PC-9 (cell line): ENCODE measurements at regions of chr19 and their contacts with region 1.

Region 1: GRCh38 chr19:51097166-51097738 is 11.0 kb downstream of the CTU1 start:
- DNase-seq: peak; percentile 62 to 69
- H3K4me3 ChIP-seq: no peak overlapping the region
- H3K27ac ChIP-seq: no peak overlapping the region
- H3K4me1 ChIP-seq: no peaks in the 10 kb centered on the region
- H3K27me3 ChIP-seq: no peaks in the 10 kb centered on the region
- CTCF ChIP-seq: peak; percentile 85

Region 2: GRCh38 chr19:50537762-50538230 is 559.5 kb before region 1 on chr19:
- CTCF ChIA-PET with region 1: interaction called, 3 read pairs
- POLR2A ChIA-PET with region 1: no interaction called
- intact Hi-C with region 1: loop called (anchors 1 kb)
- DNase-seq: peak; percentile 66 to 79
- H3K4me3 ChIP-seq: no peak overlapping the region
- H3K27ac ChIP-seq: no peak overlapping the region
- H3K4me1 ChIP-seq: no peaks in the 10 kb centered on the region
- H3K27me3 ChIP-seq: peaks cover 71% of the 10 kb centered on the region
- CTCF ChIP-seq: peak; percentile 86

Region 3: DNA sequence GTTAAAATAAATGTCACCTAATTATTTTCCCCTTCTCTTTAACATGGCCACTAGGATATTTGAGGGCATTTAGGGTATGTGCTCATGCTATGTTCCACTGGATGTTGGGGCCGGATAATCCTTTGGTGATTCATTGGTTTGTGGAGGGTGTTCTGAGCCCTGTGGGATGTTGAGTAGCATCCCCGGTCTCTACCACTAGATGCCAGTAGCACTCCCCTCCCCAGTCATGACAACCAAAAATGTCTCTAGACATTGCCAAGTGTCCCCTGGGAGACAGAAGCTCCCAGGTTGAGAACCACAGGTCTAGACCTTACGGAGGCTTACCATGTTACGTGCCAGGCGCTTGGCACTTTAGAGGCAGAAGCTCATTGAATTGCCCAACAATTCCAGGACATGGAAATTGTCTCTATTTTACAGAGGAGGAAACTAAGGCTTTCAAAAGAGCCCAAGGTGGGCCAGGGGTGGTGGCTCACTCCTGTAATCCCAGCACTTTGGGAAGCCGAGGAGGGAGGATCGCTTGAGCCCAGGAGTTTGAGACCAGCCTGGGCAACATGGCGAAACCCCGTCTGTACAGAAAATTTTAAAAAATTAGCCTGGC is 391.7 kb before region 1 on chr19:
- CTCF ChIA-PET with region 1: no interaction called
- POLR2A ChIA-PET with region 1: no interaction called
- intact Hi-C with region 1: loop called (anchors 1 kb)
- DNase-seq: peak; percentile 49 to 55
- H3K4me3 ChIP-seq: no peak overlapping the region
- H3K27ac ChIP-seq: no peak overlapping the region
- H3K4me1 ChIP-seq: no peaks in the 10 kb centered on the region
- H3K27me3 ChIP-seq: peaks cover 91% of the 10 kb centered on the region
- CTCF ChIP-seq: peak; percentile 75

Region 4: GRCh38 chr19:50777754-50778303 is 319.4 kb before region 1 on chr19:
- CTCF ChIA-PET with region 1: no interaction called
- POLR2A ChIA-PET with region 1: interaction called, 22 read pairs
- intact Hi-C with region 1: loop called (anchors 5 kb)
- DNase-seq: no peak
- H3K4me3 ChIP-seq: no peak overlapping the region
- H3K27ac ChIP-seq: no peak overlapping the region
- H3K4me1 ChIP-seq: no peaks in the 10 kb centered on the region
- H3K27me3 ChIP-seq: peaks cover 91% of the 10 kb centered on the region
- CTCF ChIP-seq: no peak

Region 5: DNA sequence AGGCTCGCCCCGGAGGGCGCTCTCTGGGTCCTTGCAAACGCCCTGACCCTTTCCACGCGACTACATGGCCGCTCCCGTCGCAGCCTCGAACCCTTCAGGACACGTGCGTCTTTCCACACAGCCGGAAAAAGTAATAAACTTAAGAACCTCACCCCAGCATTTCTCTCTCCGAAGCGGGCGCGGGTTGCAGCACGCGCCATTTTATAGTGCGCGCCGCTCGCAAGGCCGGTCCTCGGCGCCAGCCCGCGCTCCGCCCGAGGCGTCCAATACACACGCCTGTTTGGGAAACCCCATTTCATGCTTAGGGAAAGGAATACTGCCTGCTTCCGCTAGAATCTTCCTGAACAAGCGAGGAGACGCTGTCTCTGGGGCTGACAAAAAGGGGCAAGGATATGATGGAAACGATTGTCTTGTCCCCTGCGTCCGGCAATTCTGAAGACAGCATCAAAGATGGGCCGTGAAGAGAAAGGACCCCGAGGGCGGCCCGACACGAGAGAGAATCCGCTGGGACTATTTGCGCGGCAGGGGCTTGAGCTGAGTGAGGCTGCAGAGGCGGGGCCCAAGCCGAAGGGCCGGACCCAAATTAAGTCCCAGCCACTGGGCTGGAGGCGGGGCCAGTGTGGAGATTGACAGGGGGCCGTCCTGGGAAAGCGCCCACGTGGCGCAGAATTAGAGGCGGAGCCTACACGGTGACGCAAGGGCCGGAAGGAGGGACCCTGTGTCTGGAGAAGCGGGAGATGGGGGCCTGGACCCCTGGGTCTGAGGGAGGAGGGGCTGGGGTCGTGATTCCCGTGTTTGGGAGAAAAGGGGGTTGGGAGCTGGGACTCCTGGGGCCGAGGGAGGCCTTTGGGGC is 292.6 kb before region 1 on chr19:
- CTCF ChIA-PET with region 1: no interaction called
- POLR2A ChIA-PET with region 1: no interaction called
- intact Hi-C with region 1: loop called (anchors 5 kb)
- DNase-seq: peak; percentile 96 to 98
- H3K4me3 ChIP-seq: peak overlapping the region; percentile 76
- H3K27ac ChIP-seq: peak overlapping the region; percentile 84
- H3K4me1 ChIP-seq: peaks cover 20% of the 10 kb centered on the region
- H3K27me3 ChIP-seq: no peaks in the 10 kb centered on the region
- CTCF ChIP-seq: no peak

Region 6: DNA sequence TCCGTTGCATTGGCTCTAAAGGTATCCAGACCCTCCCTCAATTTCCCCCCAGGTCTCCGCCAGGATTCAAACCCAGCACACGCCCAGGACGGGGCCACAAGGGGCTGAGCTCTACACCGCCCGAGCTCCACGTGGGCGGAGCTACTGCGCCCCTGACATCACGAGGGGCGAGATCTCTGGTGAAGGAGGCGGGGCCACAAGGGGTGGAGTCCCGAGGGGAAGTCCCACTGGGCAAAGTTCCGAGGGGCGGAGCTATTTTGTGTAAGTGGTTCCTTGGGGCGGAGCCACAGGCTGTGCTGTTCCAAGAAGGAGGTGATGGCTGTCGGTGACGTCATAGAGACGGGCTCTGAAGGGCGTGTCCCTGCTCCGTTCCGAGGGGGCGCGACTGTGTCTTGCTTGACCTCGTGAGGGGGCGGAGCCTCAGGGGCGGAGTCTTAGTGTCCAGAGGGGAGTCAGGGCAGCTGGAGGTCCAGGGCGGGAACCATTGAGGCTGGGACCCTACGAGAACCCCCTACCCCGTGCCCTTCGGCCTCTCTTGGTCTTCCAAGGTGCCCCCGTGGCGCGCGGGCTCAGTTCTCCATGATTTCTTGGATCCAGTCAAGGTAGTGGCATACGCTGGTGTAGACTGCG is 94.6 kb before region 1 on chr19:
- CTCF ChIA-PET with region 1: interaction called, 19 read pairs
- POLR2A ChIA-PET with region 1: no interaction called
- intact Hi-C with region 1: no loop called
- DNase-seq: peak; percentile 94 to 98
- H3K4me3 ChIP-seq: peak overlapping the region; percentile 64
- H3K27ac ChIP-seq: peak overlapping the region; percentile 66
- H3K4me1 ChIP-seq: peaks cover 8% of the 10 kb centered on the region
- H3K27me3 ChIP-seq: no peaks in the 10 kb centered on the region
- CTCF ChIP-seq: no peak